CD4-positive, alpha-beta memory T cell (primary cell): ENCODE measurements at regions of chr7 and their contacts with region 1.

Region 1: GRCh38 chr7:107563775-107564552 is at the starts of genes COG5 and DUS4L:
- DNase-seq: peak; percentile 83 to 86 (median 85)
- H3K4me3 ChIP-seq: peak within 1 kb of the TSS; percentile 76 to 85
- H3K4me3 Mint-ChIP-seq: peak within 1 kb of the TSS; percentile 85 to 95 (median 90)
- H3K27ac ChIP-seq: peak within 1 kb of the TSS; percentile 97
- H3K27ac Mint-ChIP-seq: peak within 1 kb of the TSS; percentile 92 to 99 (median 97)
- H3K4me1 ChIP-seq: peaks cover 56% of the 10 kb centered on the region
- H3K4me1 Mint-ChIP-seq: peaks cover 50 to 66% (median 58%) of the 10 kb centered on the region in 4 donors
- H3K27me3 ChIP-seq: no peaks in the 10 kb centered on the region
- H3K27me3 Mint-ChIP-seq: no peaks in the 10 kb centered on the region
- total RNA-seq, gene COG5: 85.0 to 87.8 TPM
- total RNA-seq, gene DUS4L: 10.9 to 11.3 TPM

Region 2: GRCh38 chr7:107446988-107447387 is 117.0 kb before region 1 on chr7:
- CTCF ChIA-PET with region 1: no interaction called
- POLR2A ChIA-PET with region 1: no interaction called
- intact Hi-C with region 1: no loop called
- DNase-seq: no peak
- H3K4me3 ChIP-seq: no peak overlapping the region
- H3K4me3 Mint-ChIP-seq: no peak overlapping the region
- H3K27ac ChIP-seq: no peak overlapping the region
- H3K27ac Mint-ChIP-seq: no peak overlapping the region
- H3K4me1 ChIP-seq: no peaks in the 10 kb centered on the region
- H3K4me1 Mint-ChIP-seq: peaks cover 0 to 12% (median 8%) of the 10 kb centered on the region in 4 donors
- H3K27me3 ChIP-seq: no peaks in the 10 kb centered on the region
- H3K27me3 Mint-ChIP-seq: no peaks in the 10 kb centered on the region

Region 3: GRCh38 chr7:107579885-107580715 is 16.1 kb after region 1 on chr7 and contains the start of gene BCAP29:
- CTCF ChIA-PET with region 1: no interaction called
- POLR2A ChIA-PET with region 1: interaction called, 28 read pairs
- intact Hi-C with region 1: loop called (anchors 1 kb)
- DNase-seq: peak; percentile 66 to 74 (median 70)
- H3K4me3 ChIP-seq: peak within 1 kb of the TSS; percentile 43 to 74
- H3K4me3 Mint-ChIP-seq: peak within 1 kb of the TSS; percentile 84 to 94 (median 92)
- H3K27ac ChIP-seq: peak within 1 kb of the TSS; percentile 54
- H3K27ac Mint-ChIP-seq: peak within 1 kb of the TSS; percentile 71 to 96 (median 94)
- H3K4me1 ChIP-seq: peaks cover 25% of the 10 kb centered on the region
- H3K4me1 Mint-ChIP-seq: peaks cover 15 to 25% (median 19%) of the 10 kb centered on the region in 4 donors
- H3K27me3 ChIP-seq: no peaks in the 10 kb centered on the region
- H3K27me3 Mint-ChIP-seq: no peaks in the 10 kb centered on the region
- total RNA-seq, gene BCAP29: 17.0 to 18.7 TPM

Region 4: GRCh38 chr7:107622429-107622828 is 58.5 kb after region 1 on chr7:
- CTCF ChIA-PET with region 1: no interaction called
- POLR2A ChIA-PET with region 1: no interaction called
- intact Hi-C with region 1: no loop called
- DNase-seq: no peak
- H3K4me3 ChIP-seq: no peak overlapping the region
- H3K4me3 Mint-ChIP-seq: no peak overlapping the region
- H3K27ac ChIP-seq: no peak overlapping the region
- H3K27ac Mint-ChIP-seq: no peak overlapping the region
- H3K4me1 ChIP-seq: no peaks in the 10 kb centered on the region
- H3K4me1 Mint-ChIP-seq: no peaks in the 10 kb centered on the region
- H3K27me3 ChIP-seq: no peaks in the 10 kb centered on the region
- H3K27me3 Mint-ChIP-seq: no peaks in the 10 kb centered on the region

Region 5: GRCh38 chr7:107890962-107891635 is 327.1 kb after region 1 on chr7 and contains the start of gene DLD:
- CTCF ChIA-PET with region 1: no interaction called
- POLR2A ChIA-PET with region 1: interaction called, 8 read pairs
- intact Hi-C with region 1: loop called (anchors 5 kb)
- DNase-seq: peak; percentile 92 to 95 (median 93)
- H3K4me3 ChIP-seq: peak within 1 kb of the TSS; percentile 84 to 98
- H3K4me3 Mint-ChIP-seq: peak within 1 kb of the TSS; percentile 93 to 100 (median 98)
- H3K27ac ChIP-seq: peak within 1 kb of the TSS; percentile 95
- H3K27ac Mint-ChIP-seq: peak within 1 kb of the TSS; percentile 97 to 100 (median 99)
- H3K4me1 ChIP-seq: peaks cover 52% of the 10 kb centered on the region
- H3K4me1 Mint-ChIP-seq: peaks cover 40 to 56% (median 48%) of the 10 kb centered on the region in 4 donors
- H3K27me3 ChIP-seq: no peaks in the 10 kb centered on the region
- H3K27me3 Mint-ChIP-seq: peaks cover 0 to 3% of the 10 kb centered on the region in 2 donors
- total RNA-seq, gene DLD: 42.1 to 51.1 TPM

Region 6: GRCh38 chr7:108569381-108570145 is 1005.6 kb after region 1 on chr7 and contains the starts of genes DNAJB9 and THAP5:
- CTCF ChIA-PET with region 1: no interaction called
- POLR2A ChIA-PET with region 1: no interaction called
- intact Hi-C with region 1: loop called (anchors 2 kb)
- DNase-seq: peak; percentile 99 to 100 (median 100)
- H3K4me3 ChIP-seq: peak within 1 kb of the TSS; percentile 77 to 97
- H3K4me3 Mint-ChIP-seq: peak within 1 kb of the TSS; percentile 91 to 99 (median 96)
- H3K27ac ChIP-seq: peak within 1 kb of the TSS; percentile 100
- H3K27ac Mint-ChIP-seq: peak within 1 kb of the TSS; percentile 96 to 100 (median 99)
- H3K4me1 ChIP-seq: peaks cover 59% of the 10 kb centered on the region
- H3K4me1 Mint-ChIP-seq: peaks cover 31 to 82% (median 51%) of the 10 kb centered on the region in 4 donors
- H3K27me3 ChIP-seq: no peaks in the 10 kb centered on the region
- H3K27me3 Mint-ChIP-seq: no peaks in the 10 kb centered on the region
- total RNA-seq, gene DNAJB9: 43.6 to 49.3 TPM
- total RNA-seq, gene THAP5: 45.9 to 52.8 TPM